Activated T-helper 1 cell treated with anti-CD3 and anti-CD28 coated beads, Interleukin-12 subunit alpha, Interleukin-12 subunit beta, Interleukin-2, Interleukin-4 antibody, amounts not matched to agents 30 ng/mL and 10 ng/mL and 1 ng/mL, durations not matched to agents 14 hours and 24 hours and 36 hours (primary cell): ENCODE measurements at regions of chr2 and their contacts with region 1.

Region 1: DNA sequence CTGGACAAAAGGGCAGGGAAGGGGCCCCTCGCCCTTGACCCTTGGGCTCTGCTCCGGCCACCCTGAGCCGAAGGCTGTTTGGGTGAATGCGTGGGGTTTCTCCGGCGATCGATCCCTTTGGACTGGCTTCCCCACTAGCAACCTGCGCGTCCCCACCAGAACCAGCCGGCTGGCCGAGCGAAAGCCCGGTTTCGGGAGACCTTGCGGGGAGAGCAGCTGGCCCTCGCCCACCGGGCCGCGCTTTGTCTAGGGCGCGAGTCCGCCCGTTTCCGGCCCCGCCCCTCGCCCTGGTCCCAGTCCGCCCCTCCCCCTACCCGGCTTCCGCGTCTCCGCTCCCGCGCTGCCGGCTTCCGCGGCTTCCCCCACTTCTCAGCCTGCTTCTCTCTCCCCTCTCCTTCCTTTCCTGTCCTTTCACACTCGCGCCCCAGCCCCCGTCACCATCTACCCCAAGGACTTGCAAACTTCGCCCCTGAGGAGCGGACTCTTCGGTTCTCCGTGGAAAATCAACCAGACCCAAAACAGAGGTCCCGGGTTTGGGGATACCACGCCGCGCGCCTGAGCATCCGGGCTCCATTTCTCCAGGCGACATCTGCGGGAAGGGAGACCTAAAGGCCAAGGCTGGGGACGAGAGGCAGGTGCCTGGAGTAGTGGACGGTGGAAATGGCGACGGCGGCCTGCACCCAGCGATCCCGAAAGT is 48.0 kb upstream of the ATP6V1B1 start:
- DNase-seq: peak; percentile 22
- H3K4me3 Mint-ChIP-seq: peak overlapping the region; percentile 79
- H3K27ac Mint-ChIP-seq: peak overlapping the region; percentile 75
- H3K4me1 Mint-ChIP-seq: peaks cover 33% of the 10 kb centered on the region
- H3K27me3 Mint-ChIP-seq: peaks cover 81% of the 10 kb centered on the region

Region 2: DNA sequence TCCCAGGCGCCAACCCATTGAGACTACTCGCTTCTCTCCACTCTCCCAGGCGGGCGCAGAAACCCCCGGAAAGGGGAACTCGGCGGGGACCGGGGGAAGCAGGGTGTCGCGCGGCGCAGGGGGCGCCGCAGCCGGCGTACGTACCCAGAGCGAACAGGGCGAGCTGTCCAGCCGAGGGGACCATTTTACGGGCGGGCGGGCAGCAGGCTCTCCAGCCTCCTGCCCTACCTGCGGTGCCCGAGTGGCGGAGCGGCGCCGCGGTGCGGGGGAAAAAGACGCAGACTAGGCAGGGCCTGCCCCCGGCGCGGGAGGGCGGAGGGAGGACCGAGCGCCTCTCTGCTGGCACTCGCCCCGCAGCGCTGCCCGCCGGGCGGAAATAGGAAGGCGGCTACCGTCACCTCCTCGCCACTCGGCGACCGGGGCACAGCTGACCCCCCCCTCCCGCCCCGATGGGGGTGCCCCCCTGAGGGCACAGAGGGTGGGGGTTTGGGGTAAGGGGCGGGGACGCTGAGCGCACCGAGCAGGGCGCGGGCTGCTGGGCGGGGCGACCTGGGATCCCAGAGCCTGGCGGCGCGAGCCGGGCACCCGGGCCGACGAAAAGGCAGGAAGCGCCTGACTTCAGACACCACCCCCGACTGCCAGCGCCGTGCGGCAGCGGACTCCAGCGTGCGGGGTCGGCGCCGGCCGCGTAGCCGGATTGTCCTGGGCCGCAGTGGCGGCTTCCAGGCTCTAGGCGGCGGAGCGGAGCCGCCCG is 333.9 kb before region 1 on chr2 and contains the start of gene TGFA:
- intact Hi-C with region 1: loop called (anchors 5 kb)
- DNase-seq: peak; percentile 46
- H3K4me3 Mint-ChIP-seq: peak within 1 kb of the TSS; percentile 82
- H3K27ac Mint-ChIP-seq: no peak within 1 kb of the TSS
- H3K4me1 Mint-ChIP-seq: peaks cover 24% of the 10 kb centered on the region
- H3K27me3 Mint-ChIP-seq: peaks cover 45% of the 10 kb centered on the region
- total RNA-seq, gene TGFA: not detected in 2 replicates

Region 3: GRCh38 chr2:70828914-70829824 is 58.5 kb before region 1 on chr2:
- intact Hi-C with region 1: no loop called
- DNase-seq: no peak
- H3K4me3 Mint-ChIP-seq: no peak overlapping the region
- H3K27ac Mint-ChIP-seq: no peak overlapping the region
- H3K4me1 Mint-ChIP-seq: peaks cover 24% of the 10 kb centered on the region
- H3K27me3 Mint-ChIP-seq: no peaks in the 10 kb centered on the region

Region 4: GRCh38 chr2:70871398-70872211 is 16.1 kb before region 1 on chr2:
- intact Hi-C with region 1: loop called (anchors 2 kb)
- DNase-seq: peak; percentile 72
- H3K4me3 Mint-ChIP-seq: peak overlapping the region; percentile 15
- H3K27ac Mint-ChIP-seq: no peak overlapping the region
- H3K4me1 Mint-ChIP-seq: peaks cover 7% of the 10 kb centered on the region
- H3K27me3 Mint-ChIP-seq: peaks cover 10% of the 10 kb centered on the region

Region 5: GRCh38 chr2:70901227-70902066 is 13.7 kb after region 1 on chr2:
- intact Hi-C with region 1: loop called (anchors 1 kb)
- DNase-seq: no peak
- H3K4me3 Mint-ChIP-seq: peak overlapping the region; percentile 70
- H3K27ac Mint-ChIP-seq: peak overlapping the region; percentile 36
- H3K4me1 Mint-ChIP-seq: peaks cover 15% of the 10 kb centered on the region
- H3K27me3 Mint-ChIP-seq: peaks cover 87% of the 10 kb centered on the region

Region 6: GRCh38 chr2:70907130-70908057 is 19.7 kb after region 1 on chr2:
- intact Hi-C with region 1: loop called (anchors 1 kb)
- DNase-seq: no peak
- H3K4me3 Mint-ChIP-seq: peak overlapping the region; percentile 69
- H3K27ac Mint-ChIP-seq: no peak overlapping the region
- H3K4me1 Mint-ChIP-seq: peaks cover 12% of the 10 kb centered on the region
- H3K27me3 Mint-ChIP-seq: peaks cover 75% of the 10 kb centered on the region

Region 7: GRCh38 chr2:72150157-72150865 is 1262.6 kb after region 1 on chr2:
- intact Hi-C with region 1: loop called (anchors 5 kb)
- DNase-seq: peak; percentile 49
- H3K4me3 Mint-ChIP-seq: peak overlapping the region; percentile 32
- H3K27ac Mint-ChIP-seq: peak overlapping the region; percentile 71
- H3K4me1 Mint-ChIP-seq: peaks cover 21% of the 10 kb centered on the region
- H3K27me3 Mint-ChIP-seq: peaks cover 43% of the 10 kb centered on the region